H1 (cell line): ENCODE measurements at regions of chr1 and their contacts with region 1.

Region 1: DNA sequence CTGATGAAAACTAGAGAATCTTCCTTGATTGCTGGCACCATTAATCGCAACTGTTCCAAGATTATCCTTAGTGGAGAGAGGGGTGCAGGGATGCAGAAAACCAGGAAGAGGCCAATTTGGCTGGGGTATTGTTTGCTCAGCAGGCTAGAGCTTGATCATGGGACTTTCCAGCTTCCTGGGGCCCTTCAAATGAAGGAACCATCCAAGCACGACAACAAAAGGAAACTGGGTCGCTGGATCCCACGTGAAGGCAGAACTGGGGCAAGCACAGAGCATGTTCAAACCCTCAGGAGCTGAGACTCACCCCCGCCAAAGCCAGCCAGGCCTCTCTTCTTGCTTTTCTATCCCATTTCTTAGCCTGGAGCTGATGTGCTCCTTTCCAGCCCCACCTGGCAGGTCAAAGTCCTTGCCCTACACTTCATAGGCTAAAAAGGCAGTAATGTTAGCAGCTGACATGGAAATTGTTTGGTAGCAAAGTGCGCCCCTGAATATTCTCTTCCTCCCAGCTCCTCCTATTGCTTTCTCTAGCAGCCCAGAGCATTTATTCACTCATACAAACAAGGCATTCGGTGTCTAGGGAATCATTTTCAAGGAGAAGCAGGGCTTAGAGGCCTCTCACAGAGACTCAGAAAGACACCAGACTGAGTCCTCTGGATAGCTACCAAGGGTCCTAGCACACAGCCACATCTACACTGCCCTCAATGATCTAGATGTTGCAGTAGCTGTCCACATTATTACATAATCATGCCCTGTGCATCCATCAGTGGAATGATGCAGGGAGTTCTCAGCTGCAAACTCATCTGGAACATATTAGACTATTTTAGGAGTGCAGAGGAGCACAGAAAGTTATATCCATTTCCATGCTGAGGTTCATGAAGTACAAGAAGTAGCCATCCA is 11.5 kb downstream of the KCNA2 start:
- DNase-seq: no peak
- H3K4me3 ChIP-seq: no peak overlapping the region
- H3K27ac ChIP-seq: no peak overlapping the region
- H3K4me1 ChIP-seq: peaks cover 0 to 2% (median 0%) of the 10 kb centered on the region in 4 experiments; a peak in 1 of 7 replicates
- H3K27me3 ChIP-seq: peaks cover 0 to 12% (median 2%) of the 10 kb centered on the region in 4 experiments; a peak in 3 of 7 replicates
- CTCF ChIP-seq: no peak
- EP300 ChIP-seq: no peak
- POLR2A ChIP-seq: no peak
- RAD21 ChIP-seq: no peak

Region 2: GRCh38 chr1:110548381-110548780 is 46.3 kb before region 1 on chr1:
- CTCF ChIA-PET with region 1: interaction called, 10 read pairs
- POLR2A ChIA-PET with region 1: no interaction called
- DNase-seq: peak in 1 of 2 experiments; percentile 52
- H3K4me3 ChIP-seq: no peak overlapping the region
- H3K27ac ChIP-seq: no peak overlapping the region
- H3K4me1 ChIP-seq: no peaks in the 10 kb centered on the region
- H3K27me3 ChIP-seq: peaks cover 0 to 2% (median 2%) of the 10 kb centered on the region in 4 experiments; a peak in 2 of 7 replicates
- CTCF ChIP-seq: peak; percentile 47 to 66 (median 60)
- EP300 ChIP-seq: no peak
- POLR2A ChIP-seq: no peak
- RAD21 ChIP-seq: peak; percentile 48 to 52